Left cardiac atrium (tissue), 4 donors: ENCODE measurements at regions of chr12 and their contacts with region 1.

Region 1: GRCh38 chr12:32444895-32445294 is 45.5 kb downstream of the FGD4 start:
- DNase-seq: no peak
- ATAC-seq: peak; percentile 36 to 63

Region 2: DNA sequence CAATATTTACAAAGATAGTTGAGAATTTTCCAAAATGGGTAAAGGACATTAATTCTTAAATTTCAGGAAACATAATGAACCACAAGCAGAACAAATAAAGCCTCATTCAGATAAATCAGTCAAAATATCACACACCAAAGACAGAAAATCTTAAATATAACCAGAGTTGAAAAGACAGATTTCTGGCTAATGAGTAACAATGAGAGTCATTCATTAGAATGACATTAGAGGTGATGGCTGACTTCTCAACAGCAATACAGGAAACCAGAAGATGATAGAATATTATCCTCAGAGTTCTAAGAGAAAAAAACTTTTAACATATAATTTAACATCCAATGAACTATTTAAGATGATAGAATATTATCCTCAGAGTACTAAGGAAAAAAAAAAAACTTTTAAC is 978.1 kb before region 1 on chr12:
- intact Hi-C with region 1: no loop called
- DNase-seq: no peak
- ATAC-seq: no peak

Region 3: DNA sequence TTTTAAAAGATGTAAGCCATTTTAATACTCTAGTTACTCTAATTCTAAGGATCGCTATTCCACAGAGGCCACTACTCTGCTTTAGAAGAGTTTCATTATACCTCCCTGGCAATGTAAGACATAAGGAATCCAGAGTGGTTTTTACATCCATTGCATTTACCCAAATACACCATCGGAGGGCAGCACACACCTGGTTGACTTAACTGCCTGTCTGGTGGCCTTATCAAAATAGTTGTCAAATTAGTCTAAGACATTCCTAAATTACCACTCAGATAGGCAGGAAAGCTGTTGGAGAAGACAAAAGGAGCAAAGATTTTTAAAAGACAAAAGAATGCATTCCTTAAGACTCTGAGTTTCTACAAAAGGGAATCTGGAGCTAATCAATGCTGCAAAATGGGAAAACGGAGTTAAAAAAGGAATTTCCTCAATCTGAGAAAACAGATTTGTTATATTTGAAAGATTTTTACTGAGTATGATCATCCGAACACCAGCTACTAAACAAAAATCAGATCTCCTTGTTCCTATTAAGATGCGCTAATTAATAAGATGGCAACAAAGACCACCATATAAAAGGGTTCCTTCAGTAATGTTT is 79.3 kb before region 1 on chr12:
- intact Hi-C with region 1: loop called in 1 of 2 experiments (anchors 5 kb)
- DNase-seq: no peak
- ATAC-seq: peak; percentile 68 to 76

Region 4: GRCh38 chr12:32399337-32400113 is 45.4 kb before region 1 on chr12 and contains the start of gene FGD4:
- intact Hi-C with region 1: loop called in 1 of 2 experiments (anchors 5 kb)
- DNase-seq: peak; percentile 92
- ATAC-seq: peak; percentile 97 to 98
- total RNA-seq, gene FGD4: 15.9 to 16.0 TPM

Region 5: DNA sequence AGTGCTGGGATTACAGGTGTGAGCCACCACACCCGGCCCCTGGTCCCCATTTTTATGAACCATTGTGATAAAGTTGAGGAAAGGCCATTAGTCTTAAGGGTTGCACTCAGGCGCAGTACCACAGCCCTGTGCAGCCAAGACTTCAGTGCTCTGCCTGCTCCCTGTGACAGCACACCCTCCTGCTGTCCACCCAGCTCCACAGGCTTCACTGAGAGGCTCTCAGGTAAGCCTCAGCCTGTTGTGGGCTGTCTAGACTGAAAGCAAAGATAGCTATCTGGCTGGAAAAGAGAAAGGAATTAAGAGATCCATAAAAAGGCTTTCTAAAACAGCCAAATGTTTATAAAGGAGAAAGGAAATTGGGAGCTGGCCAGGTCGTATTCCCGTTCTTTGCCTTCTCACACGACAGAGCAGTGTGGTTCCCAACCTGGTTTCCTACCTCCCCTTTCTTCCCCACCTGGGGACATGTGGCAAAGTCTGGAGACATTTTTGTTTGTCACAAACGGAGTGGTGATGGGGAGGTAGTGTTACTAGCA is 215.1 kb after region 1 on chr12:
- intact Hi-C with region 1: loop called in 1 of 2 experiments (anchors 5 kb)
- DNase-seq: no peak
- ATAC-seq: no peak